CD8-positive, alpha-beta T cell (primary cell): ENCODE measurements at regions of chr5 and their contacts with region 1.

Region 1: GRCh38 chr5:58460732-58461286 is 923 bp upstream of the PLK2 start:
- DNase-seq: peak; percentile 79 to 94 (median 89)
- ATAC-seq: peak; percentile 67
- H3K4me3 ChIP-seq: peak overlapping the region; percentile 66 to 81
- H3K4me3 Mint-ChIP-seq: peak overlapping the region; percentile 90
- H3K27ac ChIP-seq: peak overlapping the region; percentile 79 to 87
- H3K27ac Mint-ChIP-seq: peak overlapping the region; percentile 83
- H3K4me1 ChIP-seq: peaks cover 7% of the 10 kb centered on the region
- H3K4me1 Mint-ChIP-seq: peaks cover 13% of the 10 kb centered on the region
- H3K27me3 ChIP-seq: peaks cover 4 to 8% of the 10 kb centered on the region in 2 experiments
- H3K27me3 Mint-ChIP-seq: peaks cover 11% of the 10 kb centered on the region
- CTCF ChIP-seq: peak; percentile 79

Region 2: GRCh38 chr5:56909294-56910209 is 1551.3 kb before region 1 on chr5 and contains the start of gene SETD9:
- CTCF ChIA-PET with region 1: no interaction called
- POLR2A ChIA-PET with region 1: no interaction called
- intact Hi-C with region 1: loop called in 1 of 2 experiments (anchors 2 kb)
- DNase-seq: peak; percentile 67 to 94 (median 87)
- ATAC-seq: peak; percentile 82
- H3K4me3 ChIP-seq: peak within 1 kb of the TSS; percentile 88
- H3K4me3 Mint-ChIP-seq: peak within 1 kb of the TSS; percentile 89
- H3K27ac ChIP-seq: peak within 1 kb of the TSS; percentile 61 to 87
- H3K27ac Mint-ChIP-seq: peak within 1 kb of the TSS; percentile 88
- H3K4me1 ChIP-seq: peaks cover 8% of the 10 kb centered on the region
- H3K4me1 Mint-ChIP-seq: peaks cover 20% of the 10 kb centered on the region
- H3K27me3 ChIP-seq: no peaks in the 10 kb centered on the region
- H3K27me3 Mint-ChIP-seq: no peaks in the 10 kb centered on the region
- CTCF ChIP-seq: no peak
- total RNA-seq, gene SETD9: 2.5 to 2.9 TPM

Region 3: GRCh38 chr5:57221049-57221568 is 1239.7 kb before region 1 on chr5:
- CTCF ChIA-PET with region 1: no interaction called
- POLR2A ChIA-PET with region 1: no interaction called
- intact Hi-C with region 1: loop called in 1 of 2 experiments (anchors 5 kb)
- DNase-seq: peak in 3 of 9 experiments; percentile 51 to 83 (median 78)
- ATAC-seq: peak; percentile 83
- H3K4me3 ChIP-seq: no peak overlapping the region
- H3K4me3 Mint-ChIP-seq: no peak overlapping the region
- H3K27ac ChIP-seq: no peak overlapping the region
- H3K27ac Mint-ChIP-seq: peak overlapping the region; percentile 64
- H3K4me1 ChIP-seq: peaks cover 14% of the 10 kb centered on the region
- H3K4me1 Mint-ChIP-seq: peaks cover 53% of the 10 kb centered on the region
- H3K27me3 ChIP-seq: no peaks in the 10 kb centered on the region
- H3K27me3 Mint-ChIP-seq: no peaks in the 10 kb centered on the region
- CTCF ChIP-seq: peak; percentile 99

Region 4: GRCh38 chr5:57494104-57495098 is 966.4 kb before region 1 on chr5:
- CTCF ChIA-PET with region 1: interaction called, 4 read pairs
- POLR2A ChIA-PET with region 1: no interaction called
- intact Hi-C with region 1: loop called in 1 of 2 experiments (anchors 1 kb)
- DNase-seq: peak in 3 of 9 experiments; percentile 9 to 28 (median 11)
- ATAC-seq: no peak
- H3K4me3 ChIP-seq: no peak overlapping the region
- H3K4me3 Mint-ChIP-seq: no peak overlapping the region
- H3K27ac ChIP-seq: no peak overlapping the region
- H3K27ac Mint-ChIP-seq: peak overlapping the region; percentile 43
- H3K4me1 ChIP-seq: peaks cover 17% of the 10 kb centered on the region
- H3K4me1 Mint-ChIP-seq: peaks cover 19% of the 10 kb centered on the region
- H3K27me3 ChIP-seq: no peaks in the 10 kb centered on the region
- H3K27me3 Mint-ChIP-seq: no peaks in the 10 kb centered on the region
- CTCF ChIP-seq: no peak

Region 5: GRCh38 chr5:57779383-57780223 is 681.2 kb before region 1 on chr5:
- CTCF ChIA-PET with region 1: interaction called, 13 read pairs
- POLR2A ChIA-PET with region 1: interaction called, 5 read pairs
- intact Hi-C with region 1: loop called in 1 of 2 experiments (anchors 2 kb)
- DNase-seq: peak in 3 of 9 experiments; percentile 6 to 44 (median 24)
- ATAC-seq: no peak
- H3K4me3 ChIP-seq: no peak overlapping the region
- H3K4me3 Mint-ChIP-seq: no peak overlapping the region
- H3K27ac ChIP-seq: no peak overlapping the region
- H3K27ac Mint-ChIP-seq: no peak overlapping the region
- H3K4me1 ChIP-seq: no peaks in the 10 kb centered on the region
- H3K4me1 Mint-ChIP-seq: no peaks in the 10 kb centered on the region
- H3K27me3 ChIP-seq: no peaks in the 10 kb centered on the region
- H3K27me3 Mint-ChIP-seq: no peaks in the 10 kb centered on the region
- CTCF ChIP-seq: no peak

Region 6: GRCh38 chr5:58683567-58683966 is 222.8 kb after region 1 on chr5:
- CTCF ChIA-PET with region 1: no interaction called
- POLR2A ChIA-PET with region 1: no interaction called
- intact Hi-C with region 1: no loop called
- DNase-seq: no peak
- ATAC-seq: no peak
- H3K4me3 ChIP-seq: no peak overlapping the region
- H3K4me3 Mint-ChIP-seq: no peak overlapping the region
- H3K27ac ChIP-seq: no peak overlapping the region
- H3K27ac Mint-ChIP-seq: no peak overlapping the region
- H3K4me1 ChIP-seq: no peaks in the 10 kb centered on the region
- H3K4me1 Mint-ChIP-seq: no peaks in the 10 kb centered on the region
- H3K27me3 ChIP-seq: no peaks in the 10 kb centered on the region
- H3K27me3 Mint-ChIP-seq: no peaks in the 10 kb centered on the region
- CTCF ChIP-seq: no peak

Region 7: DNA sequence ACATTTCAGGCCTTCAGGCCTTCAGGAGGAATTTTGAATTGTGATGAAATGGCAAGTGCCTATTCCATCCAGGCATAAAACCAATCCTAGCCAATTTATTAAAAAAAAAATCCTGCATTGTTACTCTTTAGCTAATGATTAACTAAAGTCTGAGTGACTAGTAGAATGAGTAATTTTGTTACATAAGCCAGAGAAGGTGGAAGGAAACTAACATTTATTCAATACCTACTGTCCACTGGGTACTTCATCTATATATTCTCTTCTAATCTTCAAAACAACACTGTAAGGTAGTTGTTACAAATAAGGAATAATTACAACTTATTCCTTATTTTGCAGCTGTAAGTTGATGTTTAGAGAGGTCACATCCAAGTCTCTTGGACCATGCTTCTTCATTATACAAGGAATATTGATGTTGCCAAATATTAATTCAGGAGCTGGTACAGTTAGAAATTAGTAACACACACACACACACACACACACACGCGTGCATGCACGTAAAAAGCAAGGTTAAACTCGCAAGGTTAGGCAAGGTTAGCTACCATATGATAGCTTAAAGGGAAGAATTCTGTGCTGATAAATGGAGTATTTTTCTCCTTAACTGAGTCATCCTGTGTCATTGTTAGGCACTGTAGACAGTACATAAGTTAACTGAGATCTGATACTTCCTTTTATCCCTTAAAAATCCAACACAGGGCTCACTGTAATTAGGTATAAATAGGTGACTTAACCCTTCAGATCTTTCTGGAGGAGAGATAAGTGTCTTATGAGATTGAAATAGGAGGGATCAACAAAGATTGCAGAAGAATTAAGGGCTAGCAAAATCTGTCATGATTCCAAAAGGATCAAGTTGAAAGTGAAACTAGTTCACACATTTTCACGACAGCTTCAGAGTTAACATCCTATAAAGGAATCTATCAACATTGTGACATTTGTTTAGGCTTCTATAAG is 835.8 kb after region 1 on chr5:
- CTCF ChIA-PET with region 1: no interaction called
- POLR2A ChIA-PET with region 1: no interaction called
- intact Hi-C with region 1: no loop called
- DNase-seq: peak in 1 of 9 experiments; percentile 12
- ATAC-seq: no peak
- H3K4me3 ChIP-seq: peak overlapping the region in 1 of 2 experiments; percentile 16
- H3K4me3 Mint-ChIP-seq: peak overlapping the region; percentile 68
- H3K27ac ChIP-seq: no peak overlapping the region
- H3K27ac Mint-ChIP-seq: no peak overlapping the region
- H3K4me1 ChIP-seq: no peaks in the 10 kb centered on the region
- H3K4me1 Mint-ChIP-seq: peaks cover 15% of the 10 kb centered on the region
- H3K27me3 ChIP-seq: no peaks in the 10 kb centered on the region
- H3K27me3 Mint-ChIP-seq: no peaks in the 10 kb centered on the region
- CTCF ChIP-seq: no peak